Naive thymus-derived CD4-positive, alpha-beta T cell (primary cell): ENCODE measurements at regions of chr17 and their contacts with region 1.

Region 1: GRCh38 chr17:49707608-49708514 is at the start of gene SLC35B1:
- DNase-seq: peak; percentile 89 to 99 (median 97)
- ATAC-seq: peak; percentile 98
- H3K4me3 ChIP-seq: peak within 1 kb of the TSS; percentile 96
- H3K4me3 Mint-ChIP-seq: peak within 1 kb of the TSS; percentile 91 to 97 (median 96)
- H3K27ac ChIP-seq: peak within 1 kb of the TSS; percentile 94
- H3K27ac Mint-ChIP-seq: peak within 1 kb of the TSS; percentile 89 to 99 (median 96)
- H3K4me1 ChIP-seq: peaks cover 22 to 27% of the 10 kb centered on the region in 2 donors
- H3K4me1 Mint-ChIP-seq: peaks cover 30 to 47% (median 42%) of the 10 kb centered on the region in 7 donors
- H3K27me3 ChIP-seq: no peaks in the 10 kb centered on the region
- H3K27me3 Mint-ChIP-seq: no peaks in the 10 kb centered on the region
- total RNA-seq, gene SLC35B1: 42.1 to 83.0 (median 49.0) TPM

Region 2: DNA sequence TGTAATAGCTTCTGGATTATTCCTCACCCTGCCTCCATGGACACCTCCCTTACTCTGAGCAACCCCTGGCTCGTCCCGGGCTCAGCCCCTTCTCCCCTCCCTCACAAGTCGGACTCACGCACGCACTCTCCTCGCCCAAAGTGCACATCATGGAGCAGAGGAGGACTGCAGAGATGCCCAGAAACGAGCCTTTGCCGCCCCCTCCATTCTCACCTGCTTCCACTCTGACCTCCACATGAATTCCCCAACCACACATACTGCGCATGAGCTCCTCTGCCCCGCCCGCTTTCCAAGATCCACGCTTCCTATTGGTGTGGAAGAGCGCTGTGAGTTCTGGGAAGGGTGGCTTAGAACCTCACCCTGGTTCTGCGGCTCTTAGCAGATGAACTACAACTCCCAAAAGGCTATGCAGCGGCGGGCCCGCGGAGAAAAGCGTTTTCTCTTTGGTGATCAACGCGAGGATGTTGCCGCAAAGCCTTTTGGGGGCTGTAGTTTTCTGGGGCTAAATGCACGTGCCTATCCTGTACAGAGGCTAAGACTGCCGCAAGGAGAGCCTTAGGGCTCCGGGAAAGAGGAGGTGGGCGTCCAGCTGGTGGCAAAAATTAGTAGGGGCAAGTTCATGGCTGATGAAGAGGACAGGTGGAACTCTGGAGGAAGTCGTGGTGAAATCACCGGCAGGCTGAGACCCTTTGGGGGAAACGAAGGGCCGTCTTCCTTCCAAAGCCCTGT is 293.1 kb before region 1 on chr17 and contains the start of gene PHB1:
- CTCF ChIA-PET with region 1: no interaction called
- POLR2A ChIA-PET with region 1: no interaction called
- intact Hi-C with region 1: loop called (anchors 1 kb)
- DNase-seq: peak; percentile 75 to 98 (median 93)
- ATAC-seq: peak; percentile 99
- H3K4me3 ChIP-seq: peak within 1 kb of the TSS; percentile 77
- H3K4me3 Mint-ChIP-seq: peak within 1 kb of the TSS; percentile 92 to 99 (median 96)
- H3K27ac ChIP-seq: peak within 1 kb of the TSS; percentile 77
- H3K27ac Mint-ChIP-seq: peak within 1 kb of the TSS; percentile 78 to 99 (median 92)
- H3K4me1 ChIP-seq: peaks cover 8% of the 10 kb centered on the region in 2 donors
- H3K4me1 Mint-ChIP-seq: peaks cover 11 to 30% (median 26%) of the 10 kb centered on the region in 7 donors
- H3K27me3 ChIP-seq: no peaks in the 10 kb centered on the region
- H3K27me3 Mint-ChIP-seq: peaks cover 0 to 3% (median 0%) of the 10 kb centered on the region in 5 donors
- total RNA-seq, gene PHB1: 50.0 to 186 (median 54.4) TPM

Region 3: DNA sequence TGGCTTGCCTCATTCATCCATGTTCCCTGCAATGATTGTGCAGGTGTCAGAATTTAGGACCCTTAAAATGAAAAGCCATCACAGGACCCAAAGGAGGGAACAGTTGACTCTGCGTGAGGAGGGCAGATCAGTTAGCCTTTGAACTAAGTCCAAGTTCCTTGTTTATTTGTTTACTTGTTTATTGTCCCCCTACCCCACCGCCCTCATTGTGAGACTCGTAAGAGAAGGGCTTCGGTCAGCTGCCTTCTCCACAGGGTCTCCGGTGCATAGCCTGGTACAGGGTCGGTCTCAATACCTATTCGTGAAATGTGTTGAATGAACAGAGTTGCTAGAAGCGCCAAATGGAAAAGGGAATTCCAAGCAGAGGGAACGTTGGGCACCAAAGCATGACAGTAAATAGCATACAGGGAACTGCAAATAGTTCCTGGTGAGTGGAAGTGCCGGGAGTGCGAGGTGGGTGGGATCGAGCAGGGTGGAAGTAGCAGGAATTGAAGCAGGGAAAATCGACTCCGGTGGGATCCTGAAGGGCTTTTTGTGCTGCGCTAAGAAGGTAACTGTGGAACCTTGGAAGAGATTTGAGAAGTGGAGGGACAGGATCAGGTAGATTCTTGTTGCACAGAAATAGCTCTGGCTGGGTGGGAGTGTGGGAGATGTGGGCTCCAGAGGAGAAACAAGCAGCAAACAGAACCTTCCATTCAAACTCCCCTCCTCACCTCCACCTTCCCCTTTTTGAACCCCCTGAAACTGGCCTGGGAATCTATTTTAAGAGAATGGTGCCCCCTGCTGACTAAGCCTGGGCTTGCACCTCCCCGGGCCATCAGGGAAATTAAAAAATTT is 12.8 kb before region 1 on chr17:
- CTCF ChIA-PET with region 1: interaction called, 17 read pairs
- POLR2A ChIA-PET with region 1: interaction called, 13 read pairs
- intact Hi-C with region 1: loop called in 1 of 2 experiments (anchors 1 kb)
- DNase-seq: peak; percentile 45 to 78 (median 62)
- ATAC-seq: peak; percentile 67
- H3K4me3 ChIP-seq: no peak overlapping the region
- H3K4me3 Mint-ChIP-seq: peak overlapping the region in 6 of 10 donors; percentile 23 to 62 (median 57)
- H3K27ac ChIP-seq: no peak overlapping the region
- H3K27ac Mint-ChIP-seq: peak overlapping the region in 8 of 9 donors; percentile 76 to 92 (median 86)
- H3K4me1 ChIP-seq: peaks cover 13 to 30% of the 10 kb centered on the region in 2 donors
- H3K4me1 Mint-ChIP-seq: peaks cover 28 to 66% (median 50%) of the 10 kb centered on the region in 7 donors
- H3K27me3 ChIP-seq: no peaks in the 10 kb centered on the region
- H3K27me3 Mint-ChIP-seq: no peaks in the 10 kb centered on the region

Region 4: DNA sequence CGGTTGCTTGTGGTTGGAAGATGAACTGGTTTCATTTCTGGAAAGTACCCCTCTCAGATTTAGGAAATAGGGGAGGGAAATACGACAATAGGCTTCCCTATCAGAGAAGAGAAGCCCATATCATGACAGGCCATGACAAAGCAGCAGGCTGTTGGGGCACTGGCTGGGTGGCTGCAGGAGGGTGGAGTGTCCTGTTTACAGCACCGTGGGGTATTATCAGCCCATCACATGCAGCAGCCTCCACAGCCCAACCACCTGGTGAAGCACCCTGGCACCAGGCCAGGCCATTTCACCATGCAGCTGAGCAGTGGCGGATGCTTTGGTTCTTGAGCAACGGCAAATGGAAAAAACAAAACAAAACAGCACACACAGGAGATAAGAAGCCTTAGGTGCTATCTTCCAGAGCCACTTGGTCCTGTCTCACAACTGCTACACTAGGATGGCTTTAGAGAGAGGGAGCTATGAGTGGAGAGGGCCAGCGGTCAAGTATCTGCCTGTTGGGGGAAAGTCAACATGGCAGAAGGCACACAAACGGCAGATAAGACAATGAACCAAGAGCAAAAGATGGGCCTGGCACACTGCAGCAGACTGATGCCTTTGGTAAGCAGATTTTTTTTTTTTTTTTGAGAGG is 31.9 kb after region 1 on chr17:
- CTCF ChIA-PET with region 1: interaction called, 8 read pairs
- POLR2A ChIA-PET with region 1: interaction called, 81 read pairs
- intact Hi-C with region 1: loop called (anchors 1 kb)
- DNase-seq: peak; percentile 69 to 99 (median 98)
- ATAC-seq: peak; percentile 99
- H3K4me3 ChIP-seq: peak overlapping the region; percentile 67
- H3K4me3 Mint-ChIP-seq: peak overlapping the region; percentile 80 to 95 (median 90)
- H3K27ac ChIP-seq: peak overlapping the region; percentile 96
- H3K27ac Mint-ChIP-seq: peak overlapping the region; percentile 97 to 100 (median 99)
- H3K4me1 ChIP-seq: peaks cover 77 to 83% of the 10 kb centered on the region in 2 donors
- H3K4me1 Mint-ChIP-seq: peaks cover 62 to 97% (median 79%) of the 10 kb centered on the region in 7 donors
- H3K27me3 ChIP-seq: no peaks in the 10 kb centered on the region
- H3K27me3 Mint-ChIP-seq: no peaks in the 10 kb centered on the region

Region 5: DNA sequence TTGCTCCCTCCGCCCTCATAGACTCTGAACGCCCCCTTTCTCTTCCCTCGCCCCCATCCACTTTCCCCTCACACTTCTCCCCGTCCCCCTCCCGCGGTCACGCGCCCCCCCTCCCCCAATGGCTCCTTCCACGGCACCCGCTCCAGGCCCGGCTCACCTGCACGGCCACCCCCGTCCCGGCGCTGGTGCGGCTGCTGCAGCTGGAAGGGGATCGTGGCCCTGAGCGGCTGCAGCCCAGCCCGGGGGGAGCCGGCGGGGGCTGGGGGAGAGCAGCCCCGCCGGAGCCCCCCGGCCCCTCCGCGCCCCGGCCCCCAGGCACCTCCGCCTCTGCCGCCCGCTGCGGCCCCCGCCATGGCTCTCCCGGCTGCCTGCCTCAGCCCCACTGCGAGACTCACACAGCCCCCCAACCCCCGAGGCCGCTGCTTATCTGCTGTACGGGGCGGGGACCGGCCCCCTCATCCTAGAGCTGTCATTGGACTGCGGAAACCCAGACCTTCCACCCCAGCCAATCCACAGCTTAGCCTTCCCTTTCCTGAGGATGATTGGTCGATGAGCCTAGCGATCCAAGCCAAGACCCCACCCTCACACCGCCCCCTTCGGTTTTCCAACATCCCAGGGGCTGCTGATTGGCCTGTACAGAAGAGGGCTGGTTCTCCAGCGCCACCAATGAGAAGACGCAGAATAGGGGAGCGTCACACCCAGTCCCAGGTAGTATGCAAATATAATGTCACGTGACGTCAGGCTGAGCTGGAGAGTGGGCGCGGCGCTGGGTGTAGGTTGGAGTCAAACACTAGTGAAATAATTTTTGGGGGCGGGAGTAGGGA is 56.1 kb after region 1 on chr17 and contains the start of gene FAM117A:
- CTCF ChIA-PET with region 1: interaction called, 7 read pairs
- POLR2A ChIA-PET with region 1: interaction called, 95 read pairs
- intact Hi-C with region 1: loop called (anchors 1 kb)
- DNase-seq: peak; percentile 72 to 99 (median 98)
- ATAC-seq: peak; percentile 93
- H3K4me3 ChIP-seq: peak within 1 kb of the TSS; percentile 82
- H3K4me3 Mint-ChIP-seq: peak within 1 kb of the TSS; percentile 92 to 99 (median 96)
- H3K27ac ChIP-seq: peak within 1 kb of the TSS; percentile 65
- H3K27ac Mint-ChIP-seq: peak within 1 kb of the TSS; percentile 62 to 96 (median 93)
- H3K4me1 ChIP-seq: peaks cover 32 to 36% of the 10 kb centered on the region in 2 donors
- H3K4me1 Mint-ChIP-seq: peaks cover 35 to 52% (median 51%) of the 10 kb centered on the region in 7 donors
- H3K27me3 ChIP-seq: no peaks in the 10 kb centered on the region
- H3K27me3 Mint-ChIP-seq: peaks cover 0 to 35% (median 0%) of the 10 kb centered on the region in 5 donors
- total RNA-seq, gene FAM117A: 31.8 to 99.1 (median 58.5) TPM

Region 6: DNA sequence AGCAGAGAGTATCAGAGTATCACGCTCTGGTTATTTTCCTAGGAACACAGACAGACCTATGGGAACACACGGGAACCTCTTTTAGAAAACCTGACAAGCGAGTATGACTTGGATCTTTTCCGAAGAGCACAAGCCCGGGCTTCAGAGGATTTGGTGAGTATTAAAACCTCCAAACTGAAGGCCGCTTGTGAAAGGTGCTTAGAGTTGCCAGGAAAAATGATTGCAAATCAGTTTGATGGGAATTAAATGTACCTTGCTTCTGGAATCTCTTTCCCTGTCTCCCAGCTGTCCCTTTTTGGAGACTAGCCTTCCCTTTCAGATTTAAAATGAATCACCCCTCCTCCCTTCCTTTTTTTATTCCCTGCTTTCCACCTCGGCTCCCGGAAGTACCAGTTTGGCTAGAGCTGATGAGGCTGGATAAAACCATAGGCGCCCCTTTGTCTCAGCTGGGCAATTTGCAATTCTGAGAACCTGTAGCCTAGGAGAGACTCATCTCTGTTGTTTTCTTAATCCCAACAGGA is 108.0 kb after region 1 on chr17:
- CTCF ChIA-PET with region 1: interaction called, 4 read pairs
- POLR2A ChIA-PET with region 1: interaction called, 7 read pairs
- intact Hi-C with region 1: loop called in 1 of 2 experiments (anchors 1 kb)
- DNase-seq: no peak
- ATAC-seq: no peak
- H3K4me3 ChIP-seq: no peak overlapping the region
- H3K4me3 Mint-ChIP-seq: peak overlapping the region in 5 of 10 donors; percentile 43 to 85 (median 67)
- H3K27ac ChIP-seq: peak overlapping the region; percentile 55
- H3K27ac Mint-ChIP-seq: peak overlapping the region; percentile 78 to 99 (median 96)
- H3K4me1 ChIP-seq: peaks cover 36 to 60% of the 10 kb centered on the region in 2 donors
- H3K4me1 Mint-ChIP-seq: peaks cover 32 to 79% (median 73%) of the 10 kb centered on the region in 7 donors
- H3K27me3 ChIP-seq: no peaks in the 10 kb centered on the region
- H3K27me3 Mint-ChIP-seq: no peaks in the 10 kb centered on the region

Region 7: DNA sequence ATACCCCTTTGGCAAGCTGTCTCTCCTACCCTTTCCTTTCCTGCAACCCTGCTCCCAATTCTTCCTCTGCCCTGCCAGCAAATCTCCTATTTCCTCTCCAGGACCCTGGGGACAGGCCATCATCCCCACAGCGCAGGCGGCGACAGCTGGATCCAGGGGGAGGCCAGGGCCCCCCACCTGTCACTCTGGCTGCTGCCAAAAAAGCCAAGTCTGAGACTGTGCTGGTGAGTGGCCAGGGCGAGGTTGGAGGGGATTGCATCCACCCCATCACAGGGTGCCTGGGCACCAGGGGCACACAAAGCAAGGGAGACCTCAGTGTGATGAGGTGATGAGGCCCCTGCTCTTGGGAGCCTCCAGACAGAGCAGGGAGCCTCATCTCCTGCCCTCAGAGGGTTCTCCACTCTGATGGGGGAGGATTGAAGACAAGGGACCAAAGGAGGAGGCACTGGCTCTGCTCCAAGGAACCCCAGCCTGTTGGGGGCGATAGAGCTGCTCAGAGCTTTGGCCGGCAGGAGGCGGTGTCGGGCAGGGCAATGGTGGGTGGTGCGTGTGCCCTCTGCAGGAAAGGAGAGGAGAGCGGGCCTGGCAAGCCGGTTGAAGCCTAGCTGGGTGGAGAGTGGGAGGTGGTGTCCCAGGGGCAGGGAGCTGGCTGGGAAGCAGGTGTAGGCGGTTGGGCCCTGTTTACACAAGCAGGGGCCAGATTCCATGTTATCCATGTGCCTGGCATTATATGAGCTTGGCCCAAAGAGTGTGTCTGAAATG is 371.7 kb after region 1 on chr17:
- CTCF ChIA-PET with region 1: no interaction called
- POLR2A ChIA-PET with region 1: no interaction called
- intact Hi-C with region 1: no loop called
- DNase-seq: no peak
- ATAC-seq: peak; percentile 76
- H3K4me3 ChIP-seq: no peak overlapping the region
- H3K4me3 Mint-ChIP-seq: no peak overlapping the region
- H3K27ac ChIP-seq: no peak overlapping the region
- H3K27ac Mint-ChIP-seq: no peak overlapping the region
- H3K4me1 ChIP-seq: no peaks in the 10 kb centered on the region
- H3K4me1 Mint-ChIP-seq: no peaks in the 10 kb centered on the region
- H3K27me3 ChIP-seq: no peaks in the 10 kb centered on the region
- H3K27me3 Mint-ChIP-seq: no peaks in the 10 kb centered on the region